Caki2 (cell line): ENCODE measurements at regions of chr3 and their contacts with region 1.

Region 1: DNA sequence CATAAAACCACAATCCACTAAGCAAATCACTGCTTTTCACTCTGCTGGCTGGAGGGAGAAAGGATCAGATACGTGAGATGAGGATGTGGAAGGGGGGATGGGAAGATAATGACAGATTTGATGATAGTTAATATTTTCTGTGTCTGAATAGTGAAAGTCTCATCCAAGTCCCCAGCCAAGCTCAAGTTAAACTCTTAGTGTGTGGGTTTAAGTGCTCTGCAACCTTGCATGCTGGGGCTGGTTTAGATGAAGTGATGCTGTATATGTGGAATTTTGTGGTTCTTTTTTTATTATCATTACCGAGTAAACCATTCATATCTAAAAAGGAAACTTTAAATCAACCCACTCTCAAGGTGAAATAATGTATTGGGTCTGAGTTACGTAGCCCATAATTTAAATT is 111.0 kb downstream of the TPRG1 start:
- DNase-seq: no peak

Region 2: GRCh38 chr3:189324538-189325138 is 41.9 kb after region 1 on chr3:
- in situ Hi-C with region 1: loop called (anchors 5 kb)
- DNase-seq: peak; percentile 98